ENCODE measurements at regions of chr7 and their contacts with region 1.

Region 1: GRCh38 chr7:101815835-101816493 is 1.5 kb upstream of the CUX1 start:
- DNase-seq: peak; percentile 76 to 87
- ATAC-seq: peak; percentile 75 to 87 (median 76)
- H3K4me3 ChIP-seq: peak overlapping the region; percentile 82
- H3K27ac ChIP-seq: peak overlapping the region; percentile 72
- H3K4me1 ChIP-seq: peaks cover 18% of the 10 kb centered on the region
- H3K27me3 ChIP-seq: no peaks in the 10 kb centered on the region
- CTCF ChIP-seq: peak; percentile 34

Region 2: GRCh38 chr7:101602484-101603241 is 213.3 kb before region 1 on chr7:
- intact Hi-C with region 1: loop called (anchors 5 kb)
- DNase-seq: peak; percentile 81 to 88
- ATAC-seq: peak; percentile 94 to 98 (median 94)
- H3K4me3 ChIP-seq: no peak overlapping the region
- H3K27ac ChIP-seq: no peak overlapping the region
- H3K4me1 ChIP-seq: peaks cover 4% of the 10 kb centered on the region
- H3K27me3 ChIP-seq: no peaks in the 10 kb centered on the region
- CTCF ChIP-seq: peak; percentile 95

Region 3: GRCh38 chr7:101743241-101743994 is 72.5 kb before region 1 on chr7:
- intact Hi-C with region 1: loop called (anchors 2 to 5 kb)
- DNase-seq: peak; percentile 61 to 72
- ATAC-seq: peak; percentile 32 to 86 (median 60)
- H3K4me3 ChIP-seq: peak overlapping the region; percentile 67
- H3K27ac ChIP-seq: no peak overlapping the region
- H3K4me1 ChIP-seq: no peaks in the 10 kb centered on the region
- H3K27me3 ChIP-seq: no peaks in the 10 kb centered on the region
- CTCF ChIP-seq: peak; percentile 48

Region 4: GRCh38 chr7:101953248-101953819 is 137.4 kb after region 1 on chr7:
- intact Hi-C with region 1: loop called in 1 of 2 experiments (anchors 5 kb)
- DNase-seq: peak; percentile 57 to 82
- ATAC-seq: peak; percentile 83 to 86 (median 84)
- H3K4me3 ChIP-seq: no peak overlapping the region
- H3K27ac ChIP-seq: peak overlapping the region; percentile 92
- H3K4me1 ChIP-seq: peaks cover 66% of the 10 kb centered on the region
- H3K27me3 ChIP-seq: no peaks in the 10 kb centered on the region
- CTCF ChIP-seq: no peak

Measured in psoas muscle (tissue), 8 donors.